ENCODE measurements at regions of chr22 and their contacts with region 1.

Region 1: DNA sequence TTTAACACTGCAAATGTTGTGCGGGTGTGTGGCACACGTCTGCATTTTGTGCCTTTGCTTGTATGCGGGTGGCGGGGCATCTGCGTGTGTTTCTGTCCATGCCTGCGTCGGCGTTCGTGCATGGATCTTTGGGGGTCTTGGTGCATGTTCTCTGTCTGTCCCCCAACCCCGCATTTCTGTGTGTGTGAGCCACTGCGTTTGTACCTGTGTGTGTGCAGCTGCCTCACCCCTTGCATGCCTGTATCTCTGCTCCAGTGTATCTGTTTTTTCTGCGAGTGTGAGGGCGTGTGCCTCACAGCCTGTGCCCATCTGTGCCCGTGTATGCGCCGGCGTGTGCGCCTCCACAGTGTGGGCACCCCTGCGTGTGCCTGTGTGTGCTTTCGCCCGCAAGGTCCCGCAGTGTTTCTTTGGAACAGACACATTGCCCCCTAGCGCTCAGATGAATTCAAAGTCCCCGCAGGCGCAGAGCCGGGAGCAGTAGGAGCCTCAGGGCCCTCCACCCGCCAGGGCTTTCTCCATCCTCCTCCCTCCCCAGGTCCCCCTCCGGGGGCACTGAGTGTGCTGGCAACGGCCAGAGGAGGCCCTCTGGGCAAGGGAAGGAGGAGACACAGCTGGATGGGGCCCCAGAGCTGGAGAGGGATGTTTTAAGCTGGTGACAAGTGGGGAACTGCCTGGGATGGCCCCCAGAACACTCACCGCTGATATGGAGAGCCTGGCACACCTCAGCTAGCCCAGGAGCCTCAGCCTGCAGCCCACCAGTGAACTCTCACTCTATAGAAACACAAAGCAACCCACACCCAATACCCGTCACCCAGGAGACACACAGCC is 3.1 kb upstream of the MN1 start:
- DNase-seq: peak; percentile 83
- ATAC-seq: peak; percentile 51

Region 2: DNA sequence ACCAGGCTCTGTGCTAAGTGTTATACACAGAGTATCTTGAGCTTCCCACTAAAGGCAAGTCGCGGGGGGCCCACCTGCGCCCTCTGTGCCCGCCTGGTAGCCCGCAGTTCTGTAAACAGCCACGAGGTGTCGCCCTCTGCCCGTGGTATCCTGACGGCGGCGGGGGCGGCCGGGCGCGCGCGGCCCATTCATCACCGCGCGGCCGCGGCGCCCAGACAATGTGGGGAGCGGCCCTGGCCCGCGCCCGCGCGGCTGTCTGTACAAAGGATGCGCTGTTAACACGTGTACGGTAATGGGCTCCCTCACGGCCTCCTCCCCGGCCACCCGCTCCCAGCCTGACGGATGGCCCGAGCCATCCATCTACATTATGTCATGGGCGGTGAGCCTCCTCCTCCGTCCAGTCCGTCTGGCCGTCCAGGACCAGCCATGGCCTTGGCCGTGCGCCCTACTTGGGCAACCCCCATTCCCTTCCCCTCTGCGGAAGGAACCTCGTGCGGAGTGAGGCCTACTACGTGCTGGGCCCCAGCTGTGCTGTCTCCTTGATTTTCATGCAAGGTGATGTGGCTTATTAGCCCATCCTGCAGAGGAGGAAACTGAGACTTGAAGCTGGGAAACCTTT is 1047.9 kb before region 1 on chr22:
- intact Hi-C with region 1: loop called (anchors 5 kb)
- DNase-seq: peak; percentile 78
- ATAC-seq: peak; percentile 83

Region 3: GRCh38 chr22:27405672-27406388 is 398.9 kb before region 1 on chr22:
- intact Hi-C with region 1: loop called (anchors 1 kb)
- DNase-seq: peak; percentile 80
- ATAC-seq: peak; percentile 75

Region 4: DNA sequence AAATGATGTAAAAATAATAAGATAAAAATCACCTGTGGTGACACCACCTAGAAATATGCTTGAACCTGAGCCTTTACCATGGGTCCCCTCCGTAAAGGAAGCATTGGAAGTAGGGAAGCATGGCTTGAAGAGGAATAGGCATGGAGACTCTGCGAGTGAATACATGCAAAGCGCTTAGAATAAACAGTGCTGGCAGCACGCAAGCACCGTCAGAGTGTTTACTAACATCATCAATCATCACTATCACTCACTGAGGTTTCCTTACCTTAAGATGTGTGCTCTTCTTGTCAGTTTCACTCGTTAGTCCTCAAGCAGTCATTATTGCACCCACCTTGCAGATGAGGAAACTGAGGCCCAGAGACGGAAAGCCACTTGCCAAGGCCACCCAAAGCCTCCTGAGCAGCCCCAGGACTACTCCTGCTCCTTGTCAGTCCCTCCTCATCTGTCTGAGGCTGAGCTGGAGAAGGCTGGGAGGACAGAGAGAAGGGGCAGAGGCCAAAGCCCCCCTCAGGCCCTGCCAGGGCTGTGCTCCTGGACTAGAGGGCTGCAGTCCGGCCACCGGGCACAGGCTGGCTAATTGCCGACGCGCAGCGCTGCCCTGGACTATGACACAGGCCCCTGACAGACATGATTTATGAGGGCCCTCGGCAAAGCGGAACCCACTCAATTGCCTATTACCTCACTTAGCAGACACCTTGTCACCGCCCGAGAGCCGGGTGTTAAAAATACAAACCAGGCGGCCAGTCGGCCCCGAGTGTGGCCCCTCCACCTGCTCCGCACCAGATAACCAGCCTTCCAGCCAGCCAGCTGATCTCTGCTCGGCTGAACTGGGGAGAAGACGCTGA is 172.0 kb before region 1 on chr22:
- intact Hi-C with region 1: loop called (anchors 5 kb)
- DNase-seq: peak; percentile 79
- ATAC-seq: peak; percentile 80